ENCODE measurements at regions of chr11 and their contacts with region 1.

Region 1: GRCh38 chr11:34916015-34916842 is at the starts of genes APIP and PDHX:
- DNase-seq: peak; percentile 99
- H3K4me3 ChIP-seq: peak within 1 kb of the TSS; percentile 58 to 73
- H3K27ac ChIP-seq: peak within 1 kb of the TSS; percentile 98
- H3K4me1 ChIP-seq: no peaks in the 10 kb centered on the region
- H3K27me3 ChIP-seq: no peaks in the 10 kb centered on the region
- CTCF ChIP-seq: peak in 2 of 4 experiments; percentile 17 to 24
- POLR2A ChIP-seq: peak; percentile 99
- total RNA-seq, gene APIP: 23.9 to 33.1 TPM
- total RNA-seq, gene PDHX: 29.1 to 45.2 TPM

Region 2: DNA sequence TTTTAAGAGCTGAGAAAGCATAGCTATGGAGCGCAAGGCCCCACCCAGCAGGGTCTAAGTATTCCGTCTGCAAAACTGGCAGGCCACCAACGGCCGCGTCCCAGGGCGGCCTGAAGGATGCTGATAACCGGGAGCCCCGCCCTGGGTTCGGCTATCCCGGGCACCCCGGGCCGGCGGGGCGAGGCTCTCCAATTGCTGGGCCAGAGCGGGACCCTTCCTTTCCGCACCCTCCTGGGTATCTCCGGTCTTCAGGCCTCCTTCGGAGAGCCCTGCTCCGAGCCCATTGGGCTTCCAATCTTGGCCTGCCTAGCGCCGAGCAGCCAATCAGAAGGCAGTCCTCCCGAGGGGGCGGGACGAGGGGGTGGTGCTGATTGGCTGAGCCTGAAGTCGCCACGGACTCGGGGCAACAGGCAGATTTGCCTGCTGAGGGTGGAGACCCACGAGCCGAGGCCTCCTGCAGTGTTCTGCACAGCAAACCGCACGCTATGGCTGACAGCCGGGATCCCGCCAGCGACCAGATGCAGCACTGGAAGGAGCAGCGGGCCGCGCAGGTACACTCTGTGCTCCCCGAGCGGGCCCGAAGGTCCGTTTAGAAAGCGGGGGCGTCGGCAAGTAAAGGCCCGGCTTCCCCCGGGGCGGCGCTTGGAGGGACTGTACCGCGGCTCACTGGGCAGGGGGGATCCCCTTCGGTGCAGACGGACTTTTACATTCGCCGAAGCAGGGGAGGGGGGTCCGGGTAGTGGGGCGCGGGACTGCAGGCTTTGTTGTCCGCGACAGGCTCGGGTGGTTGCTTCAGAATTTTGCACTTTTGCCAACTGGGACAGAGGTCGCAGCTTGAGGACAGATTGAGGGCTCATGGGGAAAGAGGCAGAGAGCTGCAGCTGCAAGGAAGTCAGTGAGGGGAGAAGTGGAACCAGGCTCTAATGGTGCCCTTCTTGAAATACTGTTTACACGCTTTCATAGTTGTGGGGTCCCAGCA is 477.4 kb before region 1 on chr11 and contains the start of gene CAT:
- intact Hi-C with region 1: loop called (anchors 10 kb)
- DNase-seq: peak; percentile 97
- H3K4me3 ChIP-seq: peak within 1 kb of the TSS; percentile 69 to 84
- H3K27ac ChIP-seq: peak within 1 kb of the TSS; percentile 79 to 82
- H3K4me1 ChIP-seq: no peaks in the 10 kb centered on the region
- H3K27me3 ChIP-seq: no peaks in the 10 kb centered on the region
- CTCF ChIP-seq: no peak
- POLR2A ChIP-seq: peak; percentile 70
- total RNA-seq, gene CAT: 67.3 to 167 TPM

Region 3: DNA sequence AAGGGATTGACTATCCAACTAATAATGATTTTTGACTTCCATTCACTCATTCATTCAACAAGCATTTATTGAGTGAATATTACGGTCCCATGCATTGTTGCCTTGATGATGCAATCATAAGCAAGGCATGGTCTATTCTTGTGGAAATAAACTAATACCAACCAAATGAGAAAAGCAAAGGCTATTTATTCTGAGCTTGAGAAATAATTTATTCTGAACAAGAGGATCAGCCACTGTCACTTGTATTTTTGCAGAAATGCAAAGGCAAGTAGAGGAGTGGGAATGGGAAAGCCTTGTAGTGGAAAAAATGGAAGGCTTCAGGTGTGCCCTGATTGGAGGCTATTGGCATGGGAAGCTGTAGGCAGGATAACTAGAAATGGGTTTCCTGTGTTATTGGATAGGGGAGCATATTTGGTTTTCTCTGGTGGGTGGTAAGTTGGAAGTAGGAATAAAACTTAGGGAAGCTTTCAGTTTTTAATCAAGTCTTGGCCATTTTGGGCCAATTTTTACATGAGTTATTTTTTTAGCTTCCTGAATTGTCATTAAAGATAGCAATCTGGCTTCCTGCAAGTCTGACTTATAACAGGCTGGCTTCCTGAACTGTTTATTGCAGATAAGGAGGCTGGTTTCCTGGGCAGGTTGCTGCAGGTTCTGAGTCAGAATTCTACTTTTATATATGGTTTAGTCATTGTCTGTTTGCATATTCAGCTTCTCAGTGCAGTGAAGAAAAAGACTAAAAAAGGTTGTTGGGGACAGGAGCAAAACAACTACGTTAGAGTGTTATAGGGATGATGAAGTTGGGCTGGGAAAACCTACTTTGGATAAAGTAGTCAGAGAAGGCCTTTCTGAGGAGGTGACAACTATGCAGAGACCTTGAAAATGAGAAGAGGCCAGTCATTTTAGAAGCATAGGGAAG is 106.8 kb before region 1 on chr11:
- intact Hi-C with region 1: no loop called
- DNase-seq: peak; percentile 38
- H3K4me3 ChIP-seq: no peak overlapping the region
- H3K27ac ChIP-seq: no peak overlapping the region
- H3K4me1 ChIP-seq: no peaks in the 10 kb centered on the region
- H3K27me3 ChIP-seq: no peaks in the 10 kb centered on the region
- CTCF ChIP-seq: no peak
- POLR2A ChIP-seq: no peak

Region 4: DNA sequence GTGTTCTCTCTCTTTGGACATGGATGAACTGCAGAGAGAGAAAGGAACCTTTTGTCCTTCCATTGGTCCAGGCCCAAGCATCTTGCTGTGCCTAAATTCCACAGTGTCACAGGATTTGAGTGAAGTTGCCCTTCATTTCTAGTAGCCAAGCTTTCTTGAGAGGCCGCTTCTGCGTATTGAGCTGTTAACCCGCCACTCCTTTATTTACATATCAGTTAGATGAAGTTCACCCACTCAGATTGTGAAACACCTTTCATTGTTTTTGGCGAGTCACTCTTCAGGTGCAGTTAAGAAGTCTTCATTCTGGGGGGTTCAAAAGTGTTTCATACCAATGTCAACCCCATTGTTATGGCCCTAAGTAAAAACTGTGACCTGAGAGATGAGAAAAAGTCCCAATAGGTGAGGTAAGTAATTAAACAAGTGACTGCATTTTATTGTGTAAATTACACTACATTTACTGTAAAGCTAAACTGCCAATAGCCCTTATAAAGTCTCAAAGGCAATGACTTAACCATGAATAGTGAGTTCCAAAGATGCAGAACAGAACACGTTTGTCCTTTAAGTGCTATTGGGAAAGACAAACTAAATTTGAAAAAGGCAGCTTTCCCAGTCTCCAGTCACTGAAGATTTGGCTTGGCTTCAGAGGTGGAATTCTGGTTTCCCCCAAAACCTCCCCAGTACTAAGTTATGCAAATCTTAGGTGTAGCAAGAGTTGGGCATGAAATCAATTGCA is 61.0 kb before region 1 on chr11:
- intact Hi-C with region 1: no loop called
- DNase-seq: peak; percentile 67
- H3K4me3 ChIP-seq: no peak overlapping the region
- H3K27ac ChIP-seq: peak overlapping the region; percentile 34 to 44
- H3K4me1 ChIP-seq: no peaks in the 10 kb centered on the region
- H3K27me3 ChIP-seq: no peaks in the 10 kb centered on the region
- CTCF ChIP-seq: no peak
- POLR2A ChIP-seq: no peak

Region 5: DNA sequence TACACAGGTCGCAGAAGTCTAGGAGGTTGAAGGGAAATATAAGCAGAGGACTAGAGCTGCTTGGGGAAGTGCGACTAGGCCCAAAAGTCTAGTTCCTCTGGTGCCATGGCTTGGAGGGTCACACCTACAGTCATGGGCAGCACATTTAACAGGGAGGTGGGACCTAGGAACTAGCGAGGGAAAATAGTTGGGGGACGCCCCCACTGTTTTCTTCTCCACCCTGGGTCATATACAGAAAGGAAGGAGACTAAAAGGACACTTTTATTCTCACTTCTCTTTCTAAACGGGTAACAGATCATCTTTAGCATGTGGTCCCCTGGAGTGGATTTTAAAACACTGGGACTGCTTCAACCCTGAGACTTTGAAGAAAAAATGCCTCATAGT is 16.6 kb before region 1 on chr11:
- intact Hi-C with region 1: no loop called
- DNase-seq: no peak
- H3K4me3 ChIP-seq: no peak overlapping the region
- H3K27ac ChIP-seq: no peak overlapping the region
- H3K4me1 ChIP-seq: no peaks in the 10 kb centered on the region
- H3K27me3 ChIP-seq: no peaks in the 10 kb centered on the region
- CTCF ChIP-seq: no peak
- POLR2A ChIP-seq: no peak